ENCODE measurements at regions of chr5 and their contacts with region 1.

Region 1: GRCh38 chr5:160021831-160022446 is 13.0 kb downstream of the TTC1 start:
- DNase-seq: peak in 2 of 5 donors; percentile 51 to 56
- ATAC-seq: peak; percentile 73 to 90 (median 84)
- H3K4me3 ChIP-seq: no peak overlapping the region
- H3K27ac ChIP-seq: peak overlapping the region in 1 of 12 donors; percentile 30
- H3K4me1 ChIP-seq: peaks cover 0 to 31% (median 4%) of the 10 kb centered on the region in 12 donors
- H3K27me3 ChIP-seq: no peaks in the 10 kb centered on the region
- CTCF ChIP-seq: peak; percentile 71 to 91 (median 82)
- POLR2A ChIP-seq: no peak

Region 2: GRCh38 chr5:160119142-160119904 is 97.4 kb after region 1 on chr5 and contains the start of gene PWWP2A:
- intact Hi-C with region 1: loop called in 3 of 10 experiments (anchors 5 to 10 kb)
- DNase-seq: peak; percentile 98 to 100 (median 99)
- ATAC-seq: peak; percentile 97 to 99 (median 98)
- H3K4me3 ChIP-seq: peak within 1 kb of the TSS; percentile 75 to 100 (median 98)
- H3K27ac ChIP-seq: peak within 1 kb of the TSS; percentile 86 to 100 (median 98)
- H3K4me1 ChIP-seq: peaks cover 0 to 20% (median 8%) of the 10 kb centered on the region in 12 donors
- H3K27me3 ChIP-seq: no peaks in the 10 kb centered on the region
- CTCF ChIP-seq: peak in 6 of 12 donors; percentile 9 to 46 (median 26)
- POLR2A ChIP-seq: peak in 1 of 2 donors; percentile 83
- total RNA-seq, gene PWWP2A: 9.3 to 13.7 (median 11.2) TPM

Region 3: GRCh38 chr5:160199410-160199911 is 177.5 kb after region 1 on chr5:
- intact Hi-C with region 1: loop called in 7 of 10 experiments (anchors 2 to 10 kb)
- DNase-seq: peak; percentile 66 to 89 (median 79)
- ATAC-seq: peak; percentile 74 to 98 (median 92)
- H3K4me3 ChIP-seq: peak overlapping the region in 11 of 12 donors; percentile 22 to 57 (median 45)
- H3K27ac ChIP-seq: peak overlapping the region in 2 of 12 donors; percentile 24 to 38
- H3K4me1 ChIP-seq: peaks cover 0 to 25% (median 16%) of the 10 kb centered on the region in 12 donors
- H3K27me3 ChIP-seq: no peaks in the 10 kb centered on the region
- CTCF ChIP-seq: peak; percentile 85 to 98 (median 96)
- POLR2A ChIP-seq: no peak

Region 4: DNA sequence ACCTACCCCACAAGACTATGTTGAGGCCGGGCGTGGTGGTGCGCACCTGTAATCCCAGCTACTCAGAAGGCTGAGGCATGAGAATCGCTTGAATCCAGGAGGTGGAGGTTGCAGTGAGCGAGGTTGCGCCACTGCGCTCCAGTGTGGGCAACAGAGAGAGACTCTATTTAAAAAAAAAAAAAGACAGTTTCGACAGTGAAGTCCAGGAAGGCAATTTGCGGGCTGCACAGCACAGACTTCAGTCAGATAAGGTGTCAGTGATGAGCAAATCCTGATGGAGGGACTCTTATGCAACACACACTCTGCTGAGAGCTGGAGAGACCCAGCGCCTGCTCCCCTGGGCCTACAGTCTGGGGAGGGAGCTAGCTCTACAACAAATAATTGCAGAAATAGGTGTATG is 276.2 kb after region 1 on chr5:
- intact Hi-C with region 1: no loop called
- DNase-seq: no peak
- ATAC-seq: peak in 2 of 4 donors; percentile 6 to 30
- H3K4me3 ChIP-seq: no peak overlapping the region
- H3K27ac ChIP-seq: no peak overlapping the region
- H3K4me1 ChIP-seq: peaks cover 0 to 23% (median 3%) of the 10 kb centered on the region in 12 donors
- H3K27me3 ChIP-seq: no peaks in the 10 kb centered on the region
- CTCF ChIP-seq: no peak
- POLR2A ChIP-seq: no peak

Region 5: GRCh38 chr5:160382346-160382745 is 360.4 kb after region 1 on chr5:
- intact Hi-C with region 1: loop called in 2 of 10 experiments (anchors 5 to 10 kb)
- DNase-seq: no peak
- ATAC-seq: no peak
- H3K4me3 ChIP-seq: no peak overlapping the region
- H3K27ac ChIP-seq: no peak overlapping the region
- H3K4me1 ChIP-seq: peaks cover 0 to 12% (median 0%) of the 10 kb centered on the region in 12 donors
- H3K27me3 ChIP-seq: no peaks in the 10 kb centered on the region
- CTCF ChIP-seq: no peak
- POLR2A ChIP-seq: no peak

Region 6: DNA sequence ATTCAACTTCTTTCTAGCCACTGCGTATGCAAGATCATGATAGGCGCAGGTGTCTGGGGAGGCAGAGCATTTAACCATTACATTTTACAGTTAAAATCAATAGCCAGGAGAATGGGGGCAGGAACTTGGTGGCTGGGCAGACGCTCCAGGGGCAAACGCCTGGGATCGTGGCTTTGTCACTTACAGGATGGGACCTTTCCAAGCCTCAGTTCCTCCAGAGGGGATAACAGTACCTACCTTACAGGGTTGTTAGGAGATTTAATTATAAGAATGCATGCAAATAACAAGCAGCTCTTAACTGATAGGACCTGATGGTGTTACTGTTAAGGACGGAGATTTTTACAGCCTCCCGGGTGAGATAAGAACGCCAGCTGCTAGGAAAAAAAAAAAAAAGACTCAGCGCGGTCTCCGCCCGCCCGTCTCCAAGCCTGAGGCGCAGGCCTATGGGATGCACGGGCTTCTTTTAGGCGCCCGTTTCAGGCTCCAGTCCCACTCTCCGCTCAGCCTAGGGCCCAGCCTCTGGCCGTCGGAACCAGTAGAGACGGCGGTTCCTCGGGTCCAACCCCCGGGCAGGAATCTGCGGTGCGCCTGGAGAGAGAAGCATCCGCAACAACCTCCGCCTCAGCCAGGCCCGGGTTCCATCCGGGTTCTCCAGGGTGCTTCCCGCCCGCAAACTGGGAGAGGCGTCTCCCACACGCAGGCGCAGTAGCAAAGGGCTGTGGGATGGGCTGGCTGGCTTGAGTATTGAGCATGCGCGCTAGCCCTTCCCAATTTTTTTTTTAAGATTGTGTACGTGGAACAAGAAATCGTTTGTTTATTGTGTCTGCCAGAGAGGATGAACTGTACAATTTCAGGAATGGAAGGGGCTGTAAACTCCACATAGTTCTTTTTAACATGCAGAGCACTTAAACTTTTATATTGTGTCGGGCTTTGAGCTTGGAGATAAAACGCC is 377.7 kb after region 1 on chr5 and contains the start of gene FAM200C:
- intact Hi-C with region 1: loop called in 7 of 10 experiments (anchors 5 to 10 kb)
- DNase-seq: peak; percentile 92 to 96 (median 95)
- ATAC-seq: peak; percentile 96 to 99 (median 98)
- H3K4me3 ChIP-seq: peak within 1 kb of the TSS; percentile 36 to 89 (median 72)
- H3K27ac ChIP-seq: peak within 1 kb of the TSS; percentile 56 to 91 (median 86)
- H3K4me1 ChIP-seq: peaks cover 0 to 32% (median 28%) of the 10 kb centered on the region in 12 donors
- H3K27me3 ChIP-seq: no peaks in the 10 kb centered on the region
- CTCF ChIP-seq: no peak
- POLR2A ChIP-seq: peak in 1 of 2 donors; percentile 95
- total RNA-seq, gene FAM200C: 2.2 to 5.0 (median 3.4) TPM